K562 (cell line): ENCODE measurements at regions of chr10 and their contacts with region 1.

Region 1: GRCh38 chr10:23158370-23158769 is 33.7 kb upstream of the PTF1A start:
- DNase-seq: peak; percentile 70 to 86 (median 82)
- ATAC-seq: peak; percentile 94
- H3K4me3 ChIP-seq: no peak overlapping the region
- H3K27ac ChIP-seq: no peak overlapping the region
- H3K4me1 ChIP-seq: peaks cover 0 to 2% of the 10 kb centered on the region in 2 experiments; a peak in 2 of 5 replicates
- H3K27me3 ChIP-seq: peaks cover 3 to 28% of the 10 kb centered on the region in 2 experiments; a peak in 4 of 5 replicates
- CTCF ChIP-seq: peak; percentile 83 to 89 (median 83)
- EP300 ChIP-seq: no peak
- POLR2A ChIP-seq: no peak
- RAD21 ChIP-seq: peak; percentile 72 to 82

Region 2: GRCh38 chr10:22666287-22667092 is 491.9 kb before region 1 on chr10:
- CTCF ChIA-PET with region 1: no interaction called
- POLR2A ChIA-PET with region 1: no interaction called
- in situ Hi-C with region 1: no loop called
- intact Hi-C with region 1: no loop called
- DNase-seq: peak in 3 of 4 experiments; percentile 25 to 86 (median 72)
- ATAC-seq: peak; percentile 85
- H3K4me3 ChIP-seq: peak overlapping the region; percentile 7; the same call in 1 of the 2 replicates
- H3K27ac ChIP-seq: peak overlapping the region; percentile 78; the same call in 2 of the 3 replicates
- H3K4me1 ChIP-seq: peaks cover 23 to 55% of the 10 kb centered on the region in 2 experiments
- H3K27me3 ChIP-seq: no peaks in the 10 kb centered on the region
- CTCF ChIP-seq: no peak
- EP300 ChIP-seq: peak; percentile 69; the same call in 1 of the 2 replicates
- POLR2A ChIP-seq: no peak
- RAD21 ChIP-seq: peak in 1 of 2 experiments; percentile 25; a peak in 1 of 4 replicates

Region 3: GRCh38 chr10:23280420-23281043 is 122.2 kb after region 1 on chr10:
- CTCF ChIA-PET with region 1: no interaction called
- POLR2A ChIA-PET with region 1: no interaction called
- in situ Hi-C with region 1: no loop called
- intact Hi-C with region 1: loop called (anchors 5 kb)
- DNase-seq: no peak
- ATAC-seq: no peak
- H3K4me3 ChIP-seq: no peak overlapping the region
- H3K27ac ChIP-seq: no peak overlapping the region
- H3K4me1 ChIP-seq: no peaks in the 10 kb centered on the region
- H3K27me3 ChIP-seq: peaks cover 0 to 3% of the 10 kb centered on the region in 2 experiments; a peak in 1 of 5 replicates
- CTCF ChIP-seq: no peak
- EP300 ChIP-seq: no peak
- POLR2A ChIP-seq: no peak
- RAD21 ChIP-seq: no peak

Region 4: DNA sequence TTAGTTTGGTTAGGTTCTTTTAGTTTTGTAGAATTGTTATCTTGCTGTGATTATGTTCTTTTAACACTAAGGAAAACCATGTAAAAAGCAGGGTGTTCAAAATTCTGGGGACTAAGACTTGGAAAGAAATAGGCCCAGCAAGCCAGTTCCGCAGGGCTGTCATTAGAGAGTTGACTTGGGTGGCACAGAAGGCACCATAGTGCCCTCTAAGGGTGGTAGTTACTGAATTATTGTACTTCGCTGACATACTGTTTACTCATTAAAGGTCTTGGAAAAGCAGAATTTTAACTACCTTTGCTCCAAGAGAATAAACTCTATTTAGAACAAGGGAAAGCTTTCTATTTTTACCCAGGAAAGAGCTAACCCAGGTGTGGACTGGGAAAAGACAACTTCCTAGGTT is 367.0 kb after region 1 on chr10:
- CTCF ChIA-PET with region 1: no interaction called
- POLR2A ChIA-PET with region 1: no interaction called
- in situ Hi-C with region 1: no loop called
- intact Hi-C with region 1: loop called (anchors 10 kb)
- DNase-seq: no peak
- ATAC-seq: no peak
- H3K4me3 ChIP-seq: no peak overlapping the region
- H3K27ac ChIP-seq: no peak overlapping the region
- H3K4me1 ChIP-seq: no peaks in the 10 kb centered on the region
- H3K27me3 ChIP-seq: no peaks in the 10 kb centered on the region
- CTCF ChIP-seq: 0 out of 6 replicates have a peak, but pooled peaks of 1 of the 3 experiments have one; percentile 24
- EP300 ChIP-seq: no peak
- POLR2A ChIP-seq: no peak
- RAD21 ChIP-seq: peak in 1 of 2 experiments; percentile 31; a peak in 1 of 4 replicates

Region 5: GRCh38 chr10:24197263-24197662 is 1038.9 kb after region 1 on chr10:
- CTCF ChIA-PET with region 1: interaction called, 3 read pairs
- POLR2A ChIA-PET with region 1: no interaction called
- in situ Hi-C with region 1: no loop called
- intact Hi-C with region 1: loop called (anchors 2 kb)
- DNase-seq: no peak
- ATAC-seq: no peak
- H3K4me3 ChIP-seq: no peak overlapping the region
- H3K27ac ChIP-seq: no peak overlapping the region
- H3K4me1 ChIP-seq: no peaks in the 10 kb centered on the region
- H3K27me3 ChIP-seq: no peaks in the 10 kb centered on the region
- CTCF ChIP-seq: no peak
- EP300 ChIP-seq: no peak
- POLR2A ChIP-seq: no peak
- RAD21 ChIP-seq: no peak

Region 6: GRCh38 chr10:24503461-24504320 is 1345.3 kb after region 1 on chr10:
- CTCF ChIA-PET with region 1: no interaction called
- POLR2A ChIA-PET with region 1: no interaction called
- in situ Hi-C with region 1: loop called (anchors 25 kb)
- intact Hi-C with region 1: loop called (anchors 5 kb)
- DNase-seq: peak; percentile 41 to 66 (median 58)
- ATAC-seq: peak; percentile 89
- H3K4me3 ChIP-seq: no peak overlapping the region
- H3K27ac ChIP-seq: no peak overlapping the region
- H3K4me1 ChIP-seq: no peaks in the 10 kb centered on the region
- H3K27me3 ChIP-seq: peaks cover 4 to 24% of the 10 kb centered on the region in 2 experiments; a peak in 3 of 5 replicates
- CTCF ChIP-seq: peak; percentile 68 to 72 (median 68)
- EP300 ChIP-seq: no peak
- POLR2A ChIP-seq: no peak
- RAD21 ChIP-seq: peak; percentile 70 to 76